ENCODE measurements at regions of chr2 and their contacts with region 1.

Region 1: DNA sequence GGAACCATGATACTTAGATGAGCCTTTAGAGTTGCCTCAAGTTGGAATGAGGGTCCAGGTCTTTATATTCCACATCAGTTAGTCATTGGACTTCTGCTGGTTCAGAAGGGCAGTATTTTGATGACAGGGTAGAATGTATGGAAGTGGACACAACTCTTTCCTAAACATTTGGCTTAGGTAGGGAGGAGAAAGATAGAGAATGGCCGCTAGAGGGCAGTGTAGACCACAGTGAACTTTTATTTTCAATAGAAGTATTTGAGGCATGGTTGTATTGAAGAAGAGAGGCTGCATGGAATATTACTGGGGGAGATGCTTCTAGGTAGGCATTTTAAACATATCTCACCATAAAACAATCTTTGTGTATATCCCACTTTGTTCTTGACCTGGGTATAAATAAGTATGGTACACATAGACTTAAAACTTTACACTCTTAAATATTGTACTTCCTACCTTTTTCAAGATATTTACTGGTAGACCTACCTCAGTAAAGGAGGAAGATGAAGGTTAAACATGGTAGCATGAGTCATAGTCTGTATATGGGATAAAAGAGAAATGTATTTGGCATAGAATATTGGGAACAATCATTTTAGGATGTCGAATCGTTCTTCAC is 497.6 kb upstream of the FAM98A start:
- DNase-seq: peak in 13 of 14 experiments; percentile 1 to 62 (median 15)
- ATAC-seq: no peak
- H3K4me3 ChIP-seq: no peak overlapping the region
- H3K4me3 Mint-ChIP-seq: no peak overlapping the region
- H3K27ac ChIP-seq: no peak overlapping the region
- H3K27ac Mint-ChIP-seq: no peak overlapping the region
- H3K4me1 ChIP-seq: no peaks in the 10 kb centered on the region
- H3K4me1 Mint-ChIP-seq: no peaks in the 10 kb centered on the region
- H3K27me3 ChIP-seq: no peaks in the 10 kb centered on the region
- H3K27me3 Mint-ChIP-seq: no peaks in the 10 kb centered on the region
- CTCF ChIP-seq: peak; percentile 73

Region 2: GRCh38 chr2:33475224-33476130 is 621.2 kb before region 1 on chr2:
- CTCF ChIA-PET with region 1: no interaction called
- POLR2A ChIA-PET with region 1: no interaction called
- intact Hi-C with region 1: loop called in 1 of 2 experiments (anchors 10 kb)
- DNase-seq: peak; percentile 65 to 93 (median 78)
- ATAC-seq: peak; percentile 79
- H3K4me3 ChIP-seq: peak overlapping the region; percentile 69
- H3K4me3 Mint-ChIP-seq: peak overlapping the region; percentile 96
- H3K27ac ChIP-seq: peak overlapping the region; percentile 87 to 92
- H3K27ac Mint-ChIP-seq: peak overlapping the region; percentile 97
- H3K4me1 ChIP-seq: peaks cover 15% of the 10 kb centered on the region
- H3K4me1 Mint-ChIP-seq: peaks cover 36% of the 10 kb centered on the region
- H3K27me3 ChIP-seq: no peaks in the 10 kb centered on the region
- H3K27me3 Mint-ChIP-seq: no peaks in the 10 kb centered on the region
- CTCF ChIP-seq: peak; percentile 90

Region 3: DNA sequence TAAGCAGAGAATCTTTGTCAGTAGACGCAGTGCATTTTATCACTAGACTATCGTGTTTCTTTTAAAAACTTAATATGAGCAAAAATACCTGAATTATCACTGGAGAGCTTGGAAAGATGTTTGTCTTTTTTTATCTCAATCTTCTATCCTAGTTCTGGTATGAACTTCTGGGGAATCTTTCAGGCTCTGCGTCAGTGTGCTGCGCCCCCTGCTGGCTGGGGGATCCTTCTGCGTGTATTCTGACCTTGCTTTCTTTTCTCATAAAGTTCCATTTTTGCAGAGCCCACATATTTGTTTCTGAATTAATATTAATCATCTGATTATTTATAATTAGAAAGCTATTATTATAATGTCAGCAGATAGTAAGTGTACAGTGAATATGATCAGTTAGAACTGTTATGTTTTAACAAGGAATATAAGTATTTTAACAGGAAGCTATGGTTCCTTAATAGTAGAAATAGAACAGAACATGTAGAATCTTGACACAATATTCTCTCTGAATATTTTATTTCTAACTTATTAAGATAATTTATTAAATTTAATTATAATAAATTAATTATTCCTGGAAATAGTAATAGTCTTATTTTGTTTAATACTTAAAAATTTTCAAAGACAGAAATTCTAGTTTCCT is 1313.9 kb after region 1 on chr2:
- CTCF ChIA-PET with region 1: no interaction called
- POLR2A ChIA-PET with region 1: no interaction called
- intact Hi-C with region 1: loop called in 1 of 2 experiments (anchors 5 kb)
- DNase-seq: peak in 7 of 14 experiments; percentile 2 to 44 (median 26)
- ATAC-seq: no peak
- H3K4me3 ChIP-seq: no peak overlapping the region
- H3K4me3 Mint-ChIP-seq: no peak overlapping the region
- H3K27ac ChIP-seq: no peak overlapping the region
- H3K27ac Mint-ChIP-seq: no peak overlapping the region
- H3K4me1 ChIP-seq: no peaks in the 10 kb centered on the region
- H3K4me1 Mint-ChIP-seq: no peaks in the 10 kb centered on the region
- H3K27me3 ChIP-seq: no peaks in the 10 kb centered on the region
- H3K27me3 Mint-ChIP-seq: no peaks in the 10 kb centered on the region
- CTCF ChIP-seq: peak; percentile 68

Measured in CD4-positive, alpha-beta T cell (primary cell).